ENCODE measurements at regions of chr18 and their contacts with region 1.

Region 1: GRCh38 chr18:22800551-22800951 is 132.6 kb upstream of the RBBP8 start:
- DNase-seq: no peak
- H3K4me3 ChIP-seq: no peak overlapping the region
- H3K27ac ChIP-seq: no peak overlapping the region
- H3K4me1 ChIP-seq: no peaks in the 10 kb centered on the region
- CTCF ChIP-seq: no peak

Region 2: DNA sequence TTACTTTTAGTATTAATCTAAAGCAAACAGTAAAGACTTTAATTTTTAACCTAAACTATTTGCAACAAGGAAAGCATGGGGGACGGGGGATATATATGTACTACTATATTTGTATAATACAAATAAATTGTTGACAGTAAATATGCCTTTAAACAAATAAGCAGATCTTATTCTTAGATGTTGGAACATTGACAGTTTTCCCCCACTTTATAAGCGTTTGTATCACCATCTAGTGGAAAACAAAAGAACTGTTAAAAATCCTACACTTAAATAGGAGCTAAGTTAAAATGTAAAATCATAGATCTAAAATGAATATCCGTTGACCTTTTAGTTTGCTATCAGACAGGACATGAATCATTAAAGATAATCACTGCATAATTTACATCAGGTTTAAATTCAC is 182.6 kb after region 1 on chr18:
- CTCF ChIA-PET with region 1: no interaction called
- POLR2A ChIA-PET with region 1: no interaction called
- intact Hi-C with region 1: loop called (anchors 2 kb)
- DNase-seq: peak; percentile 40
- H3K4me3 ChIP-seq: no peak overlapping the region
- H3K27ac ChIP-seq: no peak overlapping the region
- H3K4me1 ChIP-seq: peaks cover 6% of the 10 kb centered on the region
- CTCF ChIP-seq: peak; percentile 81

Region 3: GRCh38 chr18:23115683-23116096 is 315.1 kb after region 1 on chr18:
- CTCF ChIA-PET with region 1: no interaction called
- POLR2A ChIA-PET with region 1: no interaction called
- intact Hi-C with region 1: loop called (anchors 10 kb)
- DNase-seq: no peak
- H3K4me3 ChIP-seq: no peak overlapping the region
- H3K27ac ChIP-seq: no peak overlapping the region
- H3K4me1 ChIP-seq: peaks cover 8% of the 10 kb centered on the region
- CTCF ChIP-seq: no peak

Region 4: DNA sequence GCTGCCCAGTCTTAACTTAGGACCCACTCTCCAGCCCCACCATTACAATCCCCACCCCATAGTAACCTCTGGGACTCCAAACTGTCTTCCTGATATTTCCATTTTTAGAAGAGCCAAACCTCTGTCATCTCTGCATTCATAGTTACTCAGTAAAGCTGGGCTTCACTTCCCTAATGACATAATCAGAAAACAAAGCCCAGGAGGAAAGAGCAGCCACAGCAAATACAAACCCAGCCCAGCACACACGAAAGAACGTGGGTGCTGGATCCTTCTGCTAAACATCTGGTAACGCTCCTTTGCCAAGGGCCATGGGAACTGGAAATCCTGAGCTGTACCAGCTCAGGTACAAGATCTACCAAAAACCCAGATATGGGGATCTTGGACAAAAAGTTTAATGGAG is 615.7 kb after region 1 on chr18:
- CTCF ChIA-PET with region 1: no interaction called
- POLR2A ChIA-PET with region 1: no interaction called
- intact Hi-C with region 1: loop called (anchors 10 kb)
- DNase-seq: no peak
- H3K4me3 ChIP-seq: no peak overlapping the region
- H3K27ac ChIP-seq: no peak overlapping the region
- H3K4me1 ChIP-seq: peaks cover 23% of the 10 kb centered on the region
- CTCF ChIP-seq: no peak

Region 5: GRCh38 chr18:23586249-23587196 is 786.0 kb after region 1 on chr18 and contains the start of gene NPC1:
- CTCF ChIA-PET with region 1: no interaction called
- POLR2A ChIA-PET with region 1: no interaction called
- intact Hi-C with region 1: loop called (anchors 2 kb)
- DNase-seq: peak; percentile 94
- H3K4me3 ChIP-seq: peak within 1 kb of the TSS; percentile 87
- H3K27ac ChIP-seq: peak within 1 kb of the TSS; percentile 85
- H3K4me1 ChIP-seq: peaks cover 22% of the 10 kb centered on the region
- CTCF ChIP-seq: peak; percentile 84
- total RNA-seq, gene NPC1: 22.3 and 26.0 TPM in 2 replicates